GM10248 (cell line): ENCODE measurements at regions of chr5 and their contacts with region 1.

Region 1: GRCh38 chr5:83672646-83673045 is 48.0 kb downstream of the HAPLN1 start:
- DNase-seq: no peak
- CTCF ChIP-seq: no peak

Region 2: DNA sequence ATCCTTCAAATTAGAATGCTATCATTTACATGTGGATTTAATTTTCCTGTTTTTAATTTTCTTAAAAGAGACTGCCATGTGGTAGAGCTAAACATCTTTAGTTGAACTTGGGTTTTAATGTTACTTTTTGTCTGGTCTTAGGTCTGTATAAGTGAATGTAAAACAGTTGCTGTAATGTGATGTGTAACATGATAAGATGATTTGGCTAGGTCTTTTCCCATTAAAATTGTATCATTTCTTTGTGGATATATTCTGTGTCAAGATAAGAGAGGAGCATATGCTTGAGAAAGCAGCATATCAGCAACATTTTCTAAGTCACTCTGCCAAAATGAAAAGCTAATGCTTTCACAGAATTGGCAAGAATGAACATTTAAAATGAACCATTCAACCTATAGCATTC is 613.9 kb before region 1 on chr5:
- CTCF ChIA-PET with region 1: no interaction called
- POLR2A ChIA-PET with region 1: no interaction called
- DNase-seq: no peak
- CTCF ChIP-seq: no peak

Region 3: GRCh38 chr5:83712001-83712601 is 39.5 kb after region 1 on chr5:
- CTCF ChIA-PET with region 1: interaction called, 10 read pairs
- POLR2A ChIA-PET with region 1: no interaction called
- DNase-seq: peak; percentile 37
- CTCF ChIP-seq: peak; percentile 71